Common myeloid progenitor, CD34-positive (primary cell): ENCODE measurements at regions of chr11 and their contacts with region 1.

Region 1: DNA sequence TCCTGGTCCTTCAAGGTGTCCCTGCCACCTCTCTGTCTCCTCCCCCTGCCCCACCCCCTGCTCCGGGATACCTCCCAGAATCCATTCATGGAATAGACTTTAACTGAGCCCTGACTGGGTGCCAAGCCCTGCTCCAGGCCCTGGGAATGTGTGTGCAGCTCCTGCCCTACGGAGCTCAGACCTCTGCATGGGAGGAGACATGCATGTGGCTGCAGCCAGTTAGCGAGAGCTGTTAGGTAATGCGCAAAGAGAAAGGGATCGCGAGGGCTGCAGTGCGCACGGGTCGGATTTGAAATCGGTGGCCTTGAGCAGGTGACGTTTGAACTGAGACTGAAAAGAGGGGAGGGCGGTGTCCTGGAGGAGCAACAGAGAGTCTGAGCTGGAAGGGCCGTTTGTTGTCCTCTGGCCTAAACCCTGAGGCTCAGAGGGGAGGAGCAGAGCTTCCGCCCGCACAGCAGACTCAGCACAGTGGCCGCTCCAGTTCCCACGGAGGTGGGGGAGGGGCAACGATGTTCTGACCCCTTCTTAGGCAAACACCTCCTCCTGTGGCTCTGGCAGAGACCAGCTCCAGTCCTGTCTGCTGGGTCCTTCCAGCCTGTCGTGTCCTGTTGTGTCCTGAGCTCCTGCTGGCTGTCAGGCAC is 19.8 kb upstream of the LRRC10B start:
- DNase-seq: no peak
- H3K4me3 ChIP-seq: no peak overlapping the region
- H3K27ac ChIP-seq: no peak overlapping the region
- H3K4me1 ChIP-seq: no peaks in the 10 kb centered on the region
- H3K27me3 ChIP-seq: peaks cover 0 to 4% (median 0%) of the 10 kb centered on the region in 5 experiments

Region 2: DNA sequence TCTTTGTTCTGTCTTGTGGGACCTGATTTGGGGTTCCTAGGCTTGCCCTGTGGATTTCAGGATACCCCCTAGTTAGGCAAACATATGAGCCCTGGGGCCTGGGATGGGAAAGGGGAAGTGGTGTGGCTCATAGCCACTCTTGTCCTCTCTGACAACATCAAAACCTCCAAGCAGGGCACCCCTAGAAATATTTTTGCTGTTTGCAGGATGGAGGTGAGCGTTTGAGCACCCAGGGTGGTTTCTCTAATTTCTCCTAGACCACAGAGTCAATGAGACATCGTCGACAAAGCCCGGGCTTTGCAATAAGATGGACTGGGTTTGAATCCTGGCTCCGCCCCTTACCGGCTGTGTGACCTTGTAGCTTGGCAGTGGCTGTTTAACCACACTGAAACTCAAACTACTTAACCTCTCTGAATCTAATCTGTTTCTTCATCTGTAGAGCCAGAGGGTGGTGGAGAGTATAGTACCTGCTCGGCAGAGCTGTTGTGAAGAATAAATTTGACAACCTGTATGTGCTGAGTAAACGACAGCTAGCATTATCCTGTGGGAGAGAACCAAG is 14.5 kb after region 1 on chr11:
- CTCF ChIA-PET with region 1: interaction called, 453 read pairs
- POLR2A ChIA-PET with region 1: no interaction called
- DNase-seq: peak in 1 of 3 donors; percentile 13
- H3K4me3 ChIP-seq: no peak overlapping the region
- H3K27ac ChIP-seq: no peak overlapping the region
- H3K4me1 ChIP-seq: peaks cover 0 to 6% (median 5%) of the 10 kb centered on the region in 4 experiments
- H3K27me3 ChIP-seq: peaks cover 2 to 32% (median 24%) of the 10 kb centered on the region in 5 experiments